ENCODE measurements at regions of chr1 and their contacts with region 1.

Region 1: DNA sequence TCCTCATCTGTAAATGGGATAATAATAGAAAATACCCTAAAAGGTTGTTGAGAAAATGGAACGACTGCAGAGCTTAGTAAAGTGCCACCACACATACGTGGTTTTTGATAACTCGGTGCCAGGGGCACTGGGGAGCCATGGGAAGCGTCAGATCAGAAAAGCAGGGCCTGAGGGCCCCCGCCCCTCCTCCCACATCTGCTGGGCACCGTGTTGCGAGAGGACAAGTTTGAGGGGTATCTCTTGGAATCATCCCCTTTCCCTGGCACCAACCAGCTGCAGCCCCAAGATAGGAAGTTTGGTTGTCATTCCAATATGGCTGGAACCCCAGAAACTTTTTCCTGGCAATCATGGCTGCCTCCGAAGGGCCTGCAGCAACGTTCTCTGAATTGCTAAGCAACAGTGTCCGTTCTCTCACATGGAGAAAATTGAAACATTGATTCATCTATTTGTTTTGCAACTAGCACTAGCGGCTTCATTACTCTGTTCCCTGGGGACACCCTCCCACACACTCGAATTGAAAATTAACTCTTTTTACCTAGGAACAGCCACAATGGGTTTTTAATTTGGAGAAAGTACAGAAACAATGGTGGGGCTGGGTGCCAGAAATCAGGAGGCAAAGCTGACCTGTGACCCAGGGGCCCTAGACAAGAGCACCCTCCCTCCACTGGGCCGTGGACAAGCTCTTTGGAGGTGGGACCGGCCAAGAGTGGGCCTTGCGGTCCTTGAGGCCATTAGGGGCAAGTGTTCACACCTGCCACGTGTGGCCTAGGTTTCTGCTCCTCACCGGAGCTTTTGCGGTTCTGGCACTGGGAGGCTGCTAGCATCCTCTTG is 190.0 kb upstream of the VAMP3 start:
- DNase-seq: no peak
- ATAC-seq: no peak
- H3K4me3 ChIP-seq: no peak overlapping the region
- H3K27ac ChIP-seq: no peak overlapping the region
- H3K4me1 ChIP-seq: peaks cover 2 to 12% (median 7%) of the 10 kb centered on the region in 9 donors
- H3K27me3 ChIP-seq: peaks cover 0 to 10% (median 0%) of the 10 kb centered on the region in 7 donors
- CTCF ChIP-seq: no peak

Region 2: GRCh38 chr1:7539769-7540175 is 41.4 kb before region 1 on chr1:
- intact Hi-C with region 1: no loop called
- DNase-seq: no peak
- ATAC-seq: peak in 1 of 8 donors; percentile 10
- H3K4me3 ChIP-seq: no peak overlapping the region
- H3K27ac ChIP-seq: no peak overlapping the region
- H3K4me1 ChIP-seq: peaks cover 0 to 21% (median 0%) of the 10 kb centered on the region in 9 donors
- H3K27me3 ChIP-seq: peaks cover 0 to 13% (median 0%) of the 10 kb centered on the region in 7 donors
- CTCF ChIP-seq: peak in 7 of 9 donors; percentile 29 to 40 (median 39)

Region 3: DNA sequence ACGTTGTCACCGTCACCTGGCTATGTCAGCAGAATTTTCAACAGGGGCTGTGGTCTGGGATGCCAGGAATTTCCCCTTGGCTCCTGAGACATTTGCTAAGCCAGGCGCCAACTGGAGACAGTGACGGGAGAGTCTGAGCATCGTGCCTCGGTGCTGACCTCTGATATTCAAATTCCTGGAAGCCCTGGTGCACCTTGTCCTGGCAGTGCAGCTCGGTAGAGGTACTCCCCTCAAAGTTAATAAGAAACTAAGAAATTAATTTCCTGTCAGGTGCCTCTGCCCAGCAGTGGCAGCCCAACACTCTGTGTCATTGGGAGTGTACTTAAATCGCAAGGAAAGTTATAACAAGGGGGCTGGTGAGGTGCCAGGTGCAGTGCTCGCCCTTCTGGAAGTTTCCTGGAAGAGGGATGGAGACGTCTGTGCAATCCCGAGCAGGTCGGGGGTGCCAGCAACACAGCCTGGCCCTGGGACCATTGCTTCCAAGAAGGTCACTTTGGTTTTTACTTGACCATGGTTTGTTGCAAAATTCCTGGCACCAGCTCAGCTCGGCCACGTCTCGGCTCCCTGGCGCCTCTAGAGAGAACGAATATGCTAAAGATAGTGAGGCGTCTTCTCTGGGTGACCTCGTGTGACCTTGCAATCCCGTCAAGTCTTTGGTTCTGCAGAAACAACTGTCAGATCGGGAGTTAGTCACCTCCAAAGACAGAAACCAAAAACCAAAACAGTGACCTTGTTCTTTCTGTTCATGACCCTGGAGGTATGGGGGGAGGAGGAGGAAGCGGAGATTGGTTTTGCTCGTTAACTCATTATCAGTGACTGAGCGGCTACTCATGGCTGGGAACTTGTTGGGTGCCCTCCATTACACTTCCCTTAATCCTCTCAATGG is 40.4 kb after region 1 on chr1:
- intact Hi-C with region 1: loop called in 1 of 10 experiments (anchors 1 kb)
- DNase-seq: no peak
- ATAC-seq: peak in 1 of 8 donors; percentile 55
- H3K4me3 ChIP-seq: no peak overlapping the region
- H3K27ac ChIP-seq: no peak overlapping the region
- H3K4me1 ChIP-seq: peaks cover 0 to 19% (median 12%) of the 10 kb centered on the region in 9 donors
- H3K27me3 ChIP-seq: peaks cover 0 to 10% (median 0%) of the 10 kb centered on the region in 7 donors
- CTCF ChIP-seq: no peak

Region 4: GRCh38 chr1:7638078-7638477 is 56.9 kb after region 1 on chr1:
- intact Hi-C with region 1: no loop called
- DNase-seq: no peak
- ATAC-seq: peak in 1 of 8 donors; percentile 54
- H3K4me3 ChIP-seq: no peak overlapping the region
- H3K27ac ChIP-seq: no peak overlapping the region
- H3K4me1 ChIP-seq: peaks cover 0 to 13% (median 0%) of the 10 kb centered on the region in 9 donors
- H3K27me3 ChIP-seq: no peaks in the 10 kb centered on the region
- CTCF ChIP-seq: no peak